Panc1 (cell line): ENCODE measurements at regions of chr22 and their contacts with region 1.

Region 1: DNA sequence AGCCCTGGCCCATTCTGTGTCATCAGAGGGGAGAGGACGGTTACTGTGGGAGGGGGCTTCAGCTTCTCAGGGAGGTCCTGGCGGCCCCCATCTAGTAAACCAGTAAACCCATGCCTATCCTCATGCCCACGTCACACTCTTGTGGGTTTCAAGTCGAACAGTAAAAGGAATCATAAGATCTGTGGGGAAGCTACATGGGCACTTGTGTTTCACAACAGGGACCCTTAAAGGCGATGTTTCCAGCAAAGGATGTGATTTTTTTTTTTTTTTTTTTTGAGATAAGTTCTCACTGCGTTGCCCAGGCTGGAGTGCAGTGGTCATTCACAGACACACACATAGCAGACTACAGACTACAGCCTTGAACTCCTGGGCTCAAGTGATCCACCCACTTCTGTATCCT is 9.2 kb upstream of the PARVG start:
- DNase-seq: no peak
- ATAC-seq: no peak
- H3K4me3 ChIP-seq: no peak overlapping the region
- H3K27ac ChIP-seq: no peak overlapping the region
- H3K4me1 ChIP-seq: no peaks in the 10 kb centered on the region
- H3K27me3 ChIP-seq: no peaks in the 10 kb centered on the region
- CTCF ChIP-seq: no peak

Region 2: DNA sequence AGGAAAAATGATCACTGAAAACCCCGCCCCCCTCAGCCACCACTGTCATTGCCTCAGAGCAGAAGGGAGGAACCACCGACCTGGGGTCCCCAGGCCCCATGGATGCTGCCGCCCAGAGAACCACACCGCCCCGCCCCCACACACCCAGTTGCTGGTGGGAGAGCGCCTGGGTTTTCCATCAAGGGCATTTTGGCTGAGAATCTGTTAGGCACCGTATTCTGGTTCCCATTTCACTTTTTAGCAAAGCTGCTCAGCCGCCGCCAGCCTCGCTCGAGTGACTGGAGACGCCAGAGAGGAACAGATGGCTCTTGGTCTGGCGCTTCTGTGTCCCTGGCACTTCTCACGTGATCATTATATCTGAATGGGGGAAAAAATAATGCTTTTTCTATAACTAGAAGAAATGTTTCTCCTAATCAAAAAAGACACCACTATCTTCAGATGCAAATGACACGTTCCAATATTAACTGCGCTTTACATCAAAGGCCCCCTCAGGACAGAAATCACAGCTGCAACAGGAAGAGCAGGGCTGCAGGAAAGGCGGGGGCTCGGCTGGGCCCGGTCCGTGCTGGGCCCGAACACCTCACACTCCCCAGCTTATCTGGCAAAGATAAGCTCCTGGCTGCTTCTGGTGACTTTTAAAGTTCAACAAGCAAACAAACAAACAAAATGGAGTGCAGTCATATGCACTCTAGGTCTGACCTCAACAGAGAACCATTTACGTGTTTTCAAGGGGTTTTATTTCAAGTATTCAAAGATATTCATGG is 610.0 kb before region 1 on chr22:
- CTCF ChIA-PET with region 1: no interaction called
- POLR2A ChIA-PET with region 1: no interaction called
- in situ Hi-C with region 1: no loop called
- intact Hi-C with region 1: no loop called
- DNase-seq: no peak
- ATAC-seq: no peak
- H3K4me3 ChIP-seq: no peak overlapping the region
- H3K27ac ChIP-seq: no peak overlapping the region
- H3K4me1 ChIP-seq: no peaks in the 10 kb centered on the region
- H3K27me3 ChIP-seq: no peaks in the 10 kb centered on the region
- CTCF ChIP-seq: no peak

Region 3: DNA sequence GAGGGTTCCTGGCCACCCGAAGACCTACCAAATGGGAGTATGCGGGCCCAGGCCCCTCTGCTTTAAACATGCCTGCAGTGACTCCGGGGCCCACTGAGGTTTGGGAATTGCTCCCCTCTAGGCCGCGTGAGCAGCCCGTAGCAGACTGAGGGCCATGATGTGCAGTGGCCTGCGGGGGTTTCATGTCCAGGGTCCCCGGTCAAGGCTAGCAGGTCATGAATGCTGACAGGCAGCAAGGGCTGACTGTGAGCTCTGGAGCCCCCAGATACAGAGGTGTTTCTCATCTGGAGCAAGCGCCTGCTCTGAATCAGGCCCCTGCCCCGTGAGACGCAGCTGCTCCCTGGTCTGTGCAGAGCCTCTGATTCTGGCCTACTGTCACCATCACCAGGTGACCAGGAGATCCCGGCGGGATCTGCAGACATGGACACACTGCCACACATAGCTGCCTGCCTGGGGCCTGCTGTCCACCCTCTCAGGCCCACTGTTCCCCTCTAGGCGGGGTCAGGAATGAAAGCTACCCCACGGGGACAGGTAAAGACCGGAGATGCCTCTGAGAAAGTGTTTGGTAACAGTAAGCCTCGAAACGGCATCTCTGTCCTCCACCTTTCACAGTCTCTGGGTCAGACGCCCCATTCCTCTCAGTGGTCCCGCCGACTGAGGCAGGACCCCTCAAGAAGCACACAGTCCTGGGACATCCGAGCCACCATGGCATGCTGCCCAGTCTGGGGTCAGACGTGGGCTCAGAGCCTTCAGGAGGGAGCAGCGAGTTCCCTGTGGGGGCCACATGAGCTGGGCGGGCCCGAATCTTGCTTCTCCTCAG is 74.1 kb before region 1 on chr22:
- CTCF ChIA-PET with region 1: no interaction called
- POLR2A ChIA-PET with region 1: interaction called, 10 read pairs
- in situ Hi-C with region 1: no loop called
- intact Hi-C with region 1: no loop called
- DNase-seq: no peak
- ATAC-seq: no peak
- H3K4me3 ChIP-seq: no peak overlapping the region
- H3K27ac ChIP-seq: no peak overlapping the region
- H3K4me1 ChIP-seq: no peaks in the 10 kb centered on the region
- H3K27me3 ChIP-seq: no peaks in the 10 kb centered on the region
- CTCF ChIP-seq: no peak

Region 4: DNA sequence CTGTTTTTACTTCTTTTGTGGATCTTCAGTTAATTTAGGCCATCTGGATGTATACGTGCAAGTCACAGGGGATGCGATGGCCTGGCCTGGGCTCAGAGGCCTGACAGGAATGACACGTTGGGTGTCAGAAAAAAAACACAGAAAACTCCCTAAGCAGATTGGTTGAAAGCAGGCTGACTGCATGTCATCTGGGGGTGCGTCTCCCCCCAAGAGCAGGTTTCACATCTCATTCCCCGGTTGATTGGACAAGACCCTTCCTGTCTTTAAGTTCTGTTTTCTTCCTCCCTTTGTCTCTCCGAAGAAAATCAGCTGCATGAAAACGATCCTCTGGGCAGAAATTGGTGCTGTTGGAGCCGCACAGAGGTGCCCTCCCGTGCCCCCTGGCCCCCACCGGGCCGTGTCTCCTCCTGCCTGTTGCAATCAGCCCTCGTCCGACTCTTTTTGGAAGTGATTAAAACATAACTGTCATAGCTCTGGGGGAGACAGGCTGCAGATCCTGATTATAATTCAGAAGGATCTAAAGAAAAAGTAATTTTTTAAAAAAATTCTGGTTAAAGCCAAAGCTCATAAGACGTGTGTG is 62.7 kb before region 1 on chr22:
- CTCF ChIA-PET with region 1: no interaction called
- POLR2A ChIA-PET with region 1: no interaction called
- in situ Hi-C with region 1: no loop called
- intact Hi-C with region 1: no loop called
- DNase-seq: no peak
- ATAC-seq: no peak
- H3K4me3 ChIP-seq: no peak overlapping the region
- H3K27ac ChIP-seq: no peak overlapping the region
- H3K4me1 ChIP-seq: no peaks in the 10 kb centered on the region
- H3K27me3 ChIP-seq: no peaks in the 10 kb centered on the region
- CTCF ChIP-seq: no peak